ENCODE measurements at regions of chr3 and their contacts with region 1.

Region 1: GRCh38 chr3:125003369-125003853 is 52.4 kb downstream of the HEG1 start:
- DNase-seq: peak; percentile 76
- ATAC-seq: peak; percentile 92

Region 2: DNA sequence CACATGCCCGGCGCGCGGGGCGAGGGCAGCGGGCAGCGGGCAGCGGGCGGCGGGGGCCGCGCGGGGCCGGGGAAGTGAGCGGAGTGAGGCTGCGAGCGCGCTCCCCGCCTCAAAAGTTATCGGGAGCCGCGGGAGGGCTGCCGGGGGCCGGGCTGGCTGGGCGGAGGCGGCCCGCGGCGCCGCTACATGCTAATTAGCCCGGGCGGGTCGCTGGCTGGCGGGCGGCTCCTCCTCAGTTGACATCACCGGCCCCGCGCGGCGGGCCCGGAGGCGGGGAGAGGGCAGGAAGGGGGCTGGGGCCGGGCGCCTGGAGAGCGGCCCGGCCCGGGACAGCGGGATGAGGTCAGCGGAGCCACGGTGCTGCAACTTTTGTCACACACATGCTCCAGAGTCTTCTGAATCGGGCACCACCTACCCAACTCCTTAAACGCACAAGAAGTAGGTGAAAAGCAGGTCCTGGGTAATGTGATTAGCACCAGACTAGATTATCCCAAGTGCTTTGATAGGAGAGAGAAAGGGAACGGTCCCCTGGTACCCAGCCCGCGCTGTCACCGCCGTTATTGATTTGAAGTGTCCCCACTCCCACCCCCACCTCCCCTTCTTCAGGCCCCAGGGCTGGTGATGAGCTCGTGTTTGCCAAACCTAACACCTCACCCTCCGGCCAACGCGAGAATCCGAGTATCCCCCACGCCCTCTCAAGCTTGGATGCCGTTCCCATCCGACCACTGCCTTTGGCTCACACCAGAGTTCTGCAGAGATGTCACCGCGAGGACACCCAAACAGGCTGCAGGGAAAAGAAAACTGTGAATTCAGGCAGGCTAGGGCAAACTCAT is 52.7 kb after region 1 on chr3 and contains the start of gene HEG1:
- intact Hi-C with region 1: loop called (anchors 10 kb)
- DNase-seq: peak; percentile 96
- ATAC-seq: peak; percentile 90
- total RNA-seq, gene HEG1: 91.1 TPM

Measured in Right ventricle myocardium superior (tissue), 1 donor.